ENCODE measurements at regions of chr1 and their contacts with region 1.

Region 1: GRCh38 chr1:51519048-51519864 is at the start of gene EPS15:
- DNase-seq: peak; percentile 29
- H3K4me3 ChIP-seq: peak within 1 kb of the TSS; percentile 81
- H3K27ac ChIP-seq: peak within 1 kb of the TSS; percentile 39
- H3K27me3 ChIP-seq: no peaks in the 10 kb centered on the region
- CTCF ChIP-seq: no peak
- polyA plus RNA-seq, gene EPS15: 40.9 and 55.4 TPM in 2 replicates

Region 2: GRCh38 chr1:51506537-51506936 is 12.7 kb before region 1 on chr1:
- CTCF ChIA-PET with region 1: no interaction called
- POLR2A ChIA-PET with region 1: interaction called, 10 read pairs
- DNase-seq: peak; percentile 46
- H3K4me3 ChIP-seq: no peak overlapping the region
- H3K27ac ChIP-seq: no peak overlapping the region
- H3K27me3 ChIP-seq: no peaks in the 10 kb centered on the region
- CTCF ChIP-seq: no peak

Region 3: DNA sequence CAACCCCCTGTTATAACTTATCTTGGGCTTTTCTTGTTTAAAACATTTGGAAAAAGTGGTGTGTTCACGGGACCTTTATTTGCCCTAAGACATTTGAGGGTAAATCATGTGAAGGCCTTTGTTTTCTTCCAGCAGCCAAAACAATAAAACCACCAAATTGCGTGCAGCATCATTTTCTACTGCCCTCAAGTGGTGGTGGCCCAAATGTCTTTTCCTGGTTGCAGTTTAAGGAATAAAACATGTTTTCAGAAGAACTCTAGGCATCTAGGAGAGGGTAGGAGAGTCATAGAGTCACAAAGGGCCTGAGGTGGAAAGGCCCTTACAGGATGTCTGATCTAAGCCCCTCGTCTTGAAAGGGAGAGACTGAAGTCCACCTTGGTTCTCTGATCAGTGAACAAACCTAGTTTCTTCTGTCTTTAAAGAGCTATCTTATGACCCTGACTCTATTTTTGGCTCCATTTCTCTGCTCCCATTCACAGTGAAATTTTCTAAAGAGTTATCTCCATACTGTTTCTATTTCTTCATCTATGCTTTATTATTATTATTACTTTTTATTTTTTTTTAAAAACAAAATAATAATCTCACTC is 15.8 kb after region 1 on chr1:
- CTCF ChIA-PET with region 1: interaction called, 18 read pairs
- POLR2A ChIA-PET with region 1: interaction called, 3 read pairs
- DNase-seq: peak; percentile 29
- H3K4me3 ChIP-seq: no peak overlapping the region
- H3K27ac ChIP-seq: no peak overlapping the region
- H3K27me3 ChIP-seq: no peaks in the 10 kb centered on the region
- CTCF ChIP-seq: peak; percentile 87

Region 4: GRCh38 chr1:51936531-51936930 is 417.3 kb after region 1 on chr1:
- CTCF ChIA-PET with region 1: no interaction called
- POLR2A ChIA-PET with region 1: no interaction called
- DNase-seq: no peak
- H3K4me3 ChIP-seq: no peak overlapping the region
- H3K27ac ChIP-seq: no peak overlapping the region
- H3K27me3 ChIP-seq: no peaks in the 10 kb centered on the region
- CTCF ChIP-seq: peak; percentile 44

Measured in AG04450 (cell line).